ENCODE measurements at regions of chr19 and their contacts with region 1.

Region 1: DNA sequence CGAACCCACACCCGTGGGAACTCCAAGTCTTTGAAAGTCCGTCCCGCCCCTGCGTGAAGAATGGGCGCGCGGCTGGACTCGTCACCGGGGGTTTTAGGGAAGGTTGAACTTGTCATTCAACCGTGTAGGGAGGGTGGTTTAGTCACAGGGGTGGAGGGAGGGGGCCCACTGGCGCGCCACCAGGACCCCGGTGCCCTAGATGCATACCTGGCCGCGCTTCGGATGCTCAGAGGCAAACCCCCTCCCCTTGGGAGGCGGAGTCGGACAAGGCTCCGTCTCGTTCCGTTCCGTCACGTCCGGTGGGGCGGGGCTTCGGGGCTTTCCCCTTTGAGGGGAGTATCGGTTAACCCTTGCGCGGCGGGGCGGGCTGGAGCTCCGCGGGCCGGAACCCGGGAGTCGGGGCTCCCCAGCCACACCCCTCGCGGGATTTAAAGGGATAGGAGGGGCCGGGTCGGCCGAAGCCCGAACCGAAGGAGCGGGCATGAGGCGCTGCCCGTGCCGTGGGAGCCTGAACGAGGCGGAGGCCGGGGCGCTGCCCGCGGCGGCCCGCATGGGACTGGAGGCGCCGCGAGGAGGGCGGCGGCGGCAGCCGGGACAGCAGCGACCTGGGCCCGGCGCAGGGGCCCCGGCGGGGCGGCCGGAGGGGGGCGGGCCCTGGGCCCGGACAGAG is at the starts of genes COQ8B and ITPKC:
- H3K4me3 ChIP-seq: peak within 1 kb of the TSS; percentile 60
- H3K27ac ChIP-seq: peak within 1 kb of the TSS; percentile 86
- H3K4me1 ChIP-seq: peaks cover 47% of the 10 kb centered on the region
- CTCF ChIP-seq: peak; percentile 47

Region 2: GRCh38 chr19:40690693-40691420 is 25.9 kb before region 1 on chr19:
- CTCF ChIA-PET with region 1: interaction called, 4 read pairs
- POLR2A ChIA-PET with region 1: interaction called, 16 read pairs
- H3K4me3 ChIP-seq: peak overlapping the region; percentile 37
- H3K27ac ChIP-seq: peak overlapping the region; percentile 80; the same call in 1 of the 2 replicates
- H3K4me1 ChIP-seq: peaks cover 16% of the 10 kb centered on the region
- CTCF ChIP-seq: 0 out of 2 replicates have a peak, but pooled peaks have one; percentile 22

Region 3: GRCh38 chr19:40744554-40745401 is 28.0 kb after region 1 on chr19:
- CTCF ChIA-PET with region 1: interaction called, 8 read pairs
- POLR2A ChIA-PET with region 1: interaction called, 49 read pairs
- H3K4me3 ChIP-seq: no peak overlapping the region
- H3K27ac ChIP-seq: peak overlapping the region; percentile 49; the same call in 1 of the 2 replicates
- H3K4me1 ChIP-seq: peaks cover 11% of the 10 kb centered on the region
- CTCF ChIP-seq: peak; percentile 68